ENCODE measurements at regions of chr5 and their contacts with region 1.

Region 1: GRCh38 chr5:141564216-141564692 is 54.5 kb downstream of the DIAPH1 start:
- DNase-seq: peak; percentile 85 to 89 (median 88)
- H3K4me3 ChIP-seq: no peak overlapping the region
- H3K4me3 Mint-ChIP-seq: peak overlapping the region in 1 of 8 donors; percentile 26
- H3K27ac ChIP-seq: peak overlapping the region; percentile 59
- H3K27ac Mint-ChIP-seq: peak overlapping the region; percentile 74 to 93 (median 85)
- H3K4me1 ChIP-seq: peaks cover 17% of the 10 kb centered on the region
- H3K4me1 Mint-ChIP-seq: peaks cover 22 to 48% (median 28%) of the 10 kb centered on the region in 4 donors
- H3K27me3 ChIP-seq: no peaks in the 10 kb centered on the region
- H3K27me3 Mint-ChIP-seq: no peaks in the 10 kb centered on the region

Region 2: GRCh38 chr5:141223112-141223783 is 341.0 kb before region 1 on chr5 and contains the start of gene PCDHB14:
- CTCF ChIA-PET with region 1: interaction called, 19 read pairs
- POLR2A ChIA-PET with region 1: no interaction called
- intact Hi-C with region 1: loop called (anchors 1 kb)
- DNase-seq: peak in 1 of 5 donors; percentile 12
- H3K4me3 ChIP-seq: no peak within 1 kb of the TSS
- H3K4me3 Mint-ChIP-seq: peak within 1 kb of the TSS; percentile 8 to 68 (median 42)
- H3K27ac ChIP-seq: no peak within 1 kb of the TSS
- H3K27ac Mint-ChIP-seq: peak within 1 kb of the TSS in 1 of 7 donors; percentile 5
- H3K4me1 ChIP-seq: no peaks in the 10 kb centered on the region
- H3K4me1 Mint-ChIP-seq: peaks cover 0 to 6% (median 2%) of the 10 kb centered on the region in 4 donors
- H3K27me3 ChIP-seq: peaks cover 12% of the 10 kb centered on the region
- H3K27me3 Mint-ChIP-seq: peaks cover 30 to 47% of the 10 kb centered on the region in 2 donors
- total RNA-seq, gene PCDHB14: 0.14 to 0.15 TPM

Region 3: DNA sequence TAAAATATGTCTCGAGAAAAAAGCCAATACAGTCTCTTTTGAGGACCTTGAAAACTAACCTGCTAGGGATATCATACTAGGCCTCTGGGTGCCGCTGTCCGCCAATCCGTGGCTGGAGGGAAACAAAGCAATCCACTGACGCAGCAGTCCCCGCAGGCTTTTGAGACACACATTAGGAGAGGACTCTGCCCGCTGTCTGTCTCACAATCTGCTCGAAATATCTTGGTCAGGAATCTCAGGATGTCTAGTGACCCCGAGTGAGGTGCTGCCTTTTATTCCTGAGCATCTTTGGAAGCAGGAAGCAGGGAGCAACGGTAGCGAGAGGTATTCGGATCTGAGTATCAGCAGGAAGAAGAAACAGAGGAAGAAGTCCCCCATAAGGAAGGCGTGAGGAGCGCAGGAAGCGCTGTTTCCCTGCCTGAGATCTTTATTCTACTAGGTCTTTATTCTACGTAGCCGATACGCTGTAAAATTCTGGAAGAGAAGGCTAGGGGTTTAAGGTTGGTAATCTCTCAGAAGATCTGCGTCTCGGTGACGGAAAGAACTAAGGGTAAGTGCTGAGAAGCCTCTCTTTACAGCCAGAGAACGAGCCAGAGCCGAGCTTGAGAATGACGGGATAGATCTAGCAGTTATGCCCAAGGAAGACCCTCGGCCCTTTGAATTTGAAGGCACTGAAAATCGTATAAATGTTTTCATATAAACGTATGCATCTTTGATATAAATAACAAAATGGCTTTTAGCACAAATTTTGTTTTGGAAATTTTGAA is 238.0 kb before region 1 on chr5:
- CTCF ChIA-PET with region 1: interaction called, 38 read pairs
- POLR2A ChIA-PET with region 1: interaction called, 27 read pairs
- intact Hi-C with region 1: loop called (anchors 1 kb)
- DNase-seq: peak; percentile 67 to 80 (median 71)
- H3K4me3 ChIP-seq: peak overlapping the region; percentile 26 to 50
- H3K4me3 Mint-ChIP-seq: peak overlapping the region; percentile 91 to 97 (median 94)
- H3K27ac ChIP-seq: peak overlapping the region; percentile 37
- H3K27ac Mint-ChIP-seq: peak overlapping the region; percentile 36 to 98 (median 94)
- H3K4me1 ChIP-seq: peaks cover 2% of the 10 kb centered on the region
- H3K4me1 Mint-ChIP-seq: peaks cover 5 to 11% (median 8%) of the 10 kb centered on the region in 4 donors
- H3K27me3 ChIP-seq: no peaks in the 10 kb centered on the region
- H3K27me3 Mint-ChIP-seq: peaks cover 23 to 28% of the 10 kb centered on the region in 2 donors

Region 4: DNA sequence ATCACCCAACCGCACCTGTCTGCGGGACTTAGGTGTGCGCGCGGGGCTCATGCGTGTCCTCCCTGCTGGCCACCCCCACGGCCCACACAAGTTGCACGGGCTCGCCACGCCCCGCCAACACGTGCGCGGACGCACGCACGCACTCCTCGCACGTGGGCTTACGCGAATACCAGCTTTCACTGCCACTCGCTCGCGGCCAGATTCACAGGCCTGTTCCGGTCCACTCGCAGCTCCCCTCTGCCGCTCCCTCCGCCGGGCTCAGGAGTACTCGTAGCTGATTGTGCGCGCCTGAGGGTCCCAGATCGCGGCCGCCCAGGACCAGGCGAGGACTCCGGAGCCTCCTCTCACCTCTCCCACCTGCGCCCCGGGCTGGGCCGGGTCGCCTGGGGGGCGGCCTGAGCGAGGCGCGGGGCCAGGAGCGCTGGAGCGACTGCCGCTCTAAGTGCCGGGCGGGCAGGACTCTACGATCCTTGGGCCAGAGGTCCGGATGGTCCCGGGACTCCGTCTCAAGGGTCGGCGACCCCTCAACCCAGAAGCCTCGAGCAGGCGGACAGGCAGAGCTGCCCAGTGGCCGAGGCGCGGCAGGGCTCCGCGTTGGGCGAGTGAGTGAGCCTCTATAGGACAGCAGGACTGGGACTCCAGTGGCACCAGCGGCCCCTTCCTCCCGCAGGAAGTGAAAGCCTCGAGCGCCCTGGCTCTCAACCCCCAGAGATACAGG is 71.9 kb before region 1 on chr5:
- CTCF ChIA-PET with region 1: no interaction called
- POLR2A ChIA-PET with region 1: no interaction called
- intact Hi-C with region 1: no loop called
- DNase-seq: peak in 2 of 5 donors; percentile 17 to 21
- H3K4me3 ChIP-seq: no peak overlapping the region
- H3K4me3 Mint-ChIP-seq: peak overlapping the region; percentile 27 to 76 (median 68)
- H3K27ac ChIP-seq: no peak overlapping the region
- H3K27ac Mint-ChIP-seq: no peak overlapping the region
- H3K4me1 ChIP-seq: peaks cover 19% of the 10 kb centered on the region
- H3K4me1 Mint-ChIP-seq: peaks cover 8 to 19% (median 14%) of the 10 kb centered on the region in 4 donors
- H3K27me3 ChIP-seq: peaks cover 35% of the 10 kb centered on the region
- H3K27me3 Mint-ChIP-seq: peaks cover 60 to 70% of the 10 kb centered on the region in 2 donors

Region 5: GRCh38 chr5:141512390-141512910 is 51.8 kb before region 1 on chr5:
- CTCF ChIA-PET with region 1: interaction called, 31 read pairs
- POLR2A ChIA-PET with region 1: interaction called, 5 read pairs
- intact Hi-C with region 1: no loop called
- DNase-seq: peak; percentile 73 to 80 (median 76)
- H3K4me3 ChIP-seq: peak overlapping the region in 1 of 2 donors; percentile 70
- H3K4me3 Mint-ChIP-seq: peak overlapping the region; percentile 76 to 95 (median 90)
- H3K27ac ChIP-seq: no peak overlapping the region
- H3K27ac Mint-ChIP-seq: peak overlapping the region; percentile 6 to 89 (median 67)
- H3K4me1 ChIP-seq: peaks cover 20% of the 10 kb centered on the region
- H3K4me1 Mint-ChIP-seq: peaks cover 14 to 28% (median 22%) of the 10 kb centered on the region in 4 donors
- H3K27me3 ChIP-seq: no peaks in the 10 kb centered on the region
- H3K27me3 Mint-ChIP-seq: peaks cover 0 to 3% of the 10 kb centered on the region in 2 donors

Region 6: GRCh38 chr5:141590127-141590526 is 25.9 kb after region 1 on chr5:
- CTCF ChIA-PET with region 1: interaction called, 19 read pairs
- POLR2A ChIA-PET with region 1: no interaction called
- intact Hi-C with region 1: no loop called
- DNase-seq: no peak
- H3K4me3 ChIP-seq: no peak overlapping the region
- H3K4me3 Mint-ChIP-seq: peak overlapping the region in 1 of 8 donors; percentile 3
- H3K27ac ChIP-seq: no peak overlapping the region
- H3K27ac Mint-ChIP-seq: peak overlapping the region in 3 of 7 donors; percentile 13 to 59 (median 43)
- H3K4me1 ChIP-seq: peaks cover 52% of the 10 kb centered on the region
- H3K4me1 Mint-ChIP-seq: peaks cover 45 to 70% (median 55%) of the 10 kb centered on the region in 4 donors
- H3K27me3 ChIP-seq: no peaks in the 10 kb centered on the region
- H3K27me3 Mint-ChIP-seq: no peaks in the 10 kb centered on the region